ENCODE measurements at regions of chr16 and their contacts with region 1.

Region 1: DNA sequence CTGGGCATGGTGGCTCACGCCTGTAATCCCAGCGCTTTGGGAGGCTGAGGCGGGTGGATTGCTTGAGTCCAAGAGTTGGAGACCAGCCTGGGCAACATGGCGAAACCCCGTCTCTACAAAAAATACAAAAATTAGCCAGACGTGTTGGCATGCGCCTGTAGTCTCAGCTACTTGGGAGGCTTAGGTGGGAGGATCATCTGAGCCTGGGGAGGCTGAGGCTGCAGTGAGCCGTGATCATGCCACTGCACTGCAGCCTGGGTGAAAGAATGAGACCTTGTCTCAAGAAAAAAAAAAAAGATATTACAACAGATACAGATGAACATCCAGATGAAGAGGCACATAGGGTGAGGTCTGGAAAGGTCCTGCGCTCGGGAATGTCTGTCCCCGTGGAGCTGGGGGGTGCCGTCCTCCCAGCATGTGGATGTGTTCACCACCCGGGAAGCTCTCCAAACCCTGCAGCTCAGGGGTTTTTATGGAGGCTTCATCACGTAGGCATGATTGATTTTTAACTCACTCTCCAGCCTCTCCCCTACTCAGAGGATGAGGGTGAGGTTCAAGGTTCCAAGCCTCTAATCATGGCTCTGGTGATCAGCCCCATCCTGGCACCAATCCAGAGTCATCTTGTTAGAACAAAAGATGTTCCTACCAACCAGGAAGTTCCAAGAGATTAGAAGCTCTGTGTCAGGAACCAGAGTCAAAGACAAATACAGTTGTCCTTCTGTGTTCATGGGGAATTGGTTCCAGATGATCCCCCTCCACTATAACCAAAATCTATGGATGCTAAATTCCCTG is 85.0 kb upstream of the DNAJA2 start:
- DNase-seq: no peak
- ATAC-seq: no peak
- H3K4me3 ChIP-seq: no peak overlapping the region
- H3K27ac ChIP-seq: no peak overlapping the region
- H3K4me1 ChIP-seq: no peaks in the 10 kb centered on the region
- H3K27me3 ChIP-seq: peaks cover 0 to 11% (median 4%) of the 10 kb centered on the region in 3 donors
- CTCF ChIP-seq: no peak

Region 2: GRCh38 chr16:46996391-46996790 is 62.1 kb before region 1 on chr16:
- intact Hi-C with region 1: loop called in 1 of 2 experiments (anchors 10 kb)
- DNase-seq: no peak
- ATAC-seq: no peak
- H3K4me3 ChIP-seq: no peak overlapping the region
- H3K27ac ChIP-seq: no peak overlapping the region
- H3K4me1 ChIP-seq: no peaks in the 10 kb centered on the region
- H3K27me3 ChIP-seq: no peaks in the 10 kb centered on the region
- CTCF ChIP-seq: no peak

Region 3: DNA sequence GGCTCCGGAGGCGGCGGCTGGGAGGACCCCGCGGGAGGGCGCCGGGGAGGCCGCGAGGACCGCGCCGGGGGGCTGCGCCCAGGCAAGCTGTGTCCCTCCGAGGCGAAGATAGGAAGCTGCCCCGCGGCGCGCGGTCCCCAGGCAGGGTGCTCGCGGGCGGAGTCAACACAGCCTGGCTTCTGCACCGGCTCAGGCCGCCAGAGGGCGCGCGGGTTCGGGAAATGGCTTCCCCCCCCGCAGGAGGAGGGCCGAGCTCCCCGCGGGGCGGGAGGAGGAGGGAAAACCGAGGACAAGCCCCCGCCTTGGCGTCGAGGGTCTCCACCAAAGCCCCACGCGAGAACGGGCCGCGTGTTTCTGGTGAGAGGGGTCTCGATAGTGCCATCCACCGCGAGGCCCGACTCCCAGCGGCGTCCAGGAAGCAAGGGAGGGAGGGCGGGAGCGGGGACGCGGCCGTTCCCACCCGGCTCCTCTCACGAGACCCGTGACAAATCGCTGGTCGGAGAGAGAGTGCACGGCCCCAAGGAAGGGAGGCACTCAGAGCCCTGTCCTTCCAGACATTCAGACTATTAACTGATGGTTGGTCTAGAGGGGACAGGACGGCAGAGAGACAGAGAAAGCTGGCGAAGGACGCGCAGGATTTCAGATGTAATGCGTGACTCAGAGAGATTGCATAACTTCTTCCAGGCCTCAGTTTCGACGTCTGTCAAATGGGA is 20.6 kb before region 1 on chr16:
- intact Hi-C with region 1: no loop called
- DNase-seq: peak; percentile 91 to 94
- ATAC-seq: peak; percentile 96 to 99 (median 97)
- H3K4me3 ChIP-seq: peak overlapping the region; percentile 71
- H3K27ac ChIP-seq: no peak overlapping the region
- H3K4me1 ChIP-seq: no peaks in the 10 kb centered on the region
- H3K27me3 ChIP-seq: no peaks in the 10 kb centered on the region
- CTCF ChIP-seq: peak; percentile 88